CD8-positive, alpha-beta T cell (primary cell): ENCODE measurements at regions of chr12 and their contacts with region 1.

Region 1: GRCh38 chr12:1795785-1796514 is 24.4 kb upstream of the LRTM2 start:
- DNase-seq: peak; percentile 90 to 97 (median 94)
- ATAC-seq: peak; percentile 93
- H3K4me3 ChIP-seq: peak overlapping the region; percentile 80 to 82
- H3K4me3 Mint-ChIP-seq: peak overlapping the region; percentile 90
- H3K27ac ChIP-seq: peak overlapping the region; percentile 54 to 80
- H3K27ac Mint-ChIP-seq: peak overlapping the region; percentile 91
- H3K4me1 ChIP-seq: peaks cover 22% of the 10 kb centered on the region
- H3K4me1 Mint-ChIP-seq: peaks cover 20% of the 10 kb centered on the region
- H3K27me3 ChIP-seq: no peaks in the 10 kb centered on the region
- H3K27me3 Mint-ChIP-seq: no peaks in the 10 kb centered on the region
- CTCF ChIP-seq: peak; percentile 92

Region 2: DNA sequence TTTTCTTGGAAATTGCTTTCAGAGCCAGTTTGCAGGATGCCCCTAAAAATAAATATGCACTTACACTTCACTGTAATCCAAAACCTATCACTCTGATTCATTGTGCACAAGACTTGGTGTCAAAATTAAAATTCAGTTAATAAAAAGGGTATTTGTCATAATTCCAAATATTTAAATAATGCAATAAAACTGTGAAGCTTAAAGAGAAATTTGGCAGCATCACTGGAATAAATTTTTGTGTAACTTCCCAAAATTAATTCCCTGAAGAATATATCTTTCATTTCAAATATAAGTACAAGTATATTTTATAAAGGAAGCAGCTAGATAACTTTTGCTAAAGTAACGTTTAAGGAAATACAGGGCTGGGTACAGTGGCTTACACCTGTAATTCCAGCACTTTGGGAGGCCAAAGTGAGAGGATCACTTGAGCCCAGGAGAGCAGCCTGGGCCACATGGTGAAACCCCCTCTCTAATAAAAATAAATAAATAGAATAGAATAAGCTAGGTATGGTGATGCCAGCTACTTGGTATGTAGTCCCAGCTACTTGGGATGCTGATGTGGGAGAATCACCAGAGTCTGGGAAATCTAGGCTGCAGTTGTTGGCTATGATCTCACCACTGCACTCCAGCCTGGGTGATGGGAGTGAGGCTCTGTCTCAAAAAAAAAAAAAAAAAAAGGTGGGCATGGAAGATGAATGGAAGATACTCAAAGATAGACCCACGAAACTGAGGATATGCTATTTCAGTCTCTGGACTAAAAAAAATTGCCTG is 435.3 kb before region 1 on chr12:
- CTCF ChIA-PET with region 1: no interaction called
- POLR2A ChIA-PET with region 1: no interaction called
- intact Hi-C with region 1: no loop called
- DNase-seq: no peak
- ATAC-seq: no peak
- H3K4me3 ChIP-seq: no peak overlapping the region
- H3K4me3 Mint-ChIP-seq: no peak overlapping the region
- H3K27ac ChIP-seq: no peak overlapping the region
- H3K27ac Mint-ChIP-seq: no peak overlapping the region
- H3K4me1 ChIP-seq: no peaks in the 10 kb centered on the region
- H3K4me1 Mint-ChIP-seq: no peaks in the 10 kb centered on the region
- H3K27me3 ChIP-seq: no peaks in the 10 kb centered on the region
- H3K27me3 Mint-ChIP-seq: no peaks in the 10 kb centered on the region
- CTCF ChIP-seq: no peak

Region 3: GRCh38 chr12:1605129-1606020 is 190.6 kb before region 1 on chr12:
- CTCF ChIA-PET with region 1: interaction called, 10 read pairs
- POLR2A ChIA-PET with region 1: no interaction called
- intact Hi-C with region 1: no loop called
- DNase-seq: peak in 8 of 9 experiments; percentile 32 to 86 (median 64)
- ATAC-seq: peak; percentile 70
- H3K4me3 ChIP-seq: peak overlapping the region; percentile 36 to 37
- H3K4me3 Mint-ChIP-seq: peak overlapping the region; percentile 86
- H3K27ac ChIP-seq: no peak overlapping the region
- H3K27ac Mint-ChIP-seq: peak overlapping the region; percentile 24
- H3K4me1 ChIP-seq: peaks cover 23% of the 10 kb centered on the region
- H3K4me1 Mint-ChIP-seq: peaks cover 31% of the 10 kb centered on the region
- H3K27me3 ChIP-seq: no peaks in the 10 kb centered on the region
- H3K27me3 Mint-ChIP-seq: no peaks in the 10 kb centered on the region
- CTCF ChIP-seq: peak; percentile 64

Region 4: DNA sequence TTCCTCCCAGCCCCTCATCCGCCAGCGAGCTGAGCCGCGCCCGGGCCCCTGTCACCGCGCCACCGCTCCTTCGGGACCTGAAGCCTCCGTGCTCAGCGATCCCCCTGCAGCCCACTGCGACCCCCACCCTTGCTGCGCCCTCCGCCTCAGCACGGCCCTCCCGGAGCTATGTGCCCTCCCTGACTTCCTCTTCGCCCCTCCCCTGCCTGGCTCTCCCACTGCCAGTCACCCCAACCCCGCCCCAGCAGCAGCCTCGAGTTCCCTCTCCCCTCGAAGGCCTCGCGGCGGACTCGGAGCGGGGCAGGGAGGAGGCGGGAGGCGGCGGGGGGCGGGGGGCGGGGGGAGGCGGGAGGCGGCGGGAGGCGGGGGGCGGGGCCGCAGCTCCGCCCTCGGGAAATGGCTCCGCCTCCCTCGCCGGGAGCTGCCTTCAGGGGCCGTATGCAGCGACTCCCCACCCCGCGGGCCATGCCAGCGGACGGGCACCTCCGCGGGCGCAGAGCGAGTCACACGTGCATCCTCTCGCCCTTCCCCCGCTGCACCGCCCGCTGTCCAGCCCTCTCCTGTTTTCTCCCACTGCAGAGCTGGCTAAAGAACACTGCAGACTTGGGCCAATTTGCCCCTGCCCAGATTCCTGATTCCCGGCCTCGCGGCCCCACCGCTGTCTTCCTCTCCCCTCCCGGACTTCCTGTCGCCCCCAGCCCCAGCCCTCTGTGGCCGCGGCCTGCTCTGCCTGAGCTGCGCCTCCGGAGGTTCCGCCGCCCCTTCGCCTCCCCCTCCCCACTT is 134.2 kb before region 1 on chr12:
- CTCF ChIA-PET with region 1: interaction called, 454 read pairs
- POLR2A ChIA-PET with region 1: interaction called, 5 read pairs
- intact Hi-C with region 1: no loop called
- DNase-seq: peak; percentile 63 to 95 (median 78)
- ATAC-seq: peak; percentile 74
- H3K4me3 ChIP-seq: peak overlapping the region; percentile 50 to 52
- H3K4me3 Mint-ChIP-seq: peak overlapping the region; percentile 78
- H3K27ac ChIP-seq: peak overlapping the region in 1 of 2 experiments; percentile 56
- H3K27ac Mint-ChIP-seq: peak overlapping the region; percentile 74
- H3K4me1 ChIP-seq: peaks cover 17% of the 10 kb centered on the region
- H3K4me1 Mint-ChIP-seq: peaks cover 43% of the 10 kb centered on the region
- H3K27me3 ChIP-seq: no peaks in the 10 kb centered on the region
- H3K27me3 Mint-ChIP-seq: no peaks in the 10 kb centered on the region
- CTCF ChIP-seq: no peak

Region 5: DNA sequence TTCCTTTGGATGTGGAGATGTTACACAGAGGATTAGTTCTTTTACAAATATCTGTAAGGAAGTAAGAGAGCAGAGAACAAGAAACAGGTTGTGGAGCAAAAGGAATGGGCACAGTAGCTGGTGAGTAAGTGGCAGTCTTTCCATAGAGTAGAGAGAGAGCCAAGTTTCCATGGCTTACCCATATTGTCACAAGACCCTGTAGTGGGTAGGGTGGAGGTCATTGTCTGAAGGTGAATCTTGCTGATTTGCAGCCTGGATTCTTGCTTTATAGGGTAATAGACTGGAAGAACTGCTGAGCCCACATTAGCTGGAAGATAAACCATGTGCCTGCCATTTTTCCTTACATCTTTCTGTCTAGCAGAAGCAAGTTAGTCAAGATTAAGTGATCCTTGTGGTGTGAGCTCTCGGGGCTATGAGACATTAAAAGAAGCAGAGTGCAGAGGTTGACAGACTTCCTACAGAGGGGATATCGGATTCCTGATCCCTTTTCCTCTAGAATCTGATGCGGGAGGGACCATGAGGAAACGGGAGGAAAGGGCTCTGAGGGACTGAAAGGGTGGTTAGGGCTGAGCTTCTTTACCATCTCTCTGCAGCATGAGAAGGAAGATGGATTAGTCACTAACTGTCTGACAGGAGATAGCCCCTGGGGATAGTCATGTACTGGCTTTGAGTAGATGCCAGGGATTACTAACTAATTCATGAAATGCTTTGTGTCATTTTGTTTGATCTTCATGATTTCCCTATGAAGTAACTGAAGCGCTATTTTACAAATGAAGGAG is 19.6 kb before region 1 on chr12:
- CTCF ChIA-PET with region 1: interaction called, 13 read pairs
- POLR2A ChIA-PET with region 1: interaction called, 3 read pairs
- intact Hi-C with region 1: no loop called
- DNase-seq: no peak
- ATAC-seq: no peak
- H3K4me3 ChIP-seq: no peak overlapping the region
- H3K4me3 Mint-ChIP-seq: no peak overlapping the region
- H3K27ac ChIP-seq: no peak overlapping the region
- H3K27ac Mint-ChIP-seq: peak overlapping the region; percentile 52
- H3K4me1 ChIP-seq: no peaks in the 10 kb centered on the region
- H3K4me1 Mint-ChIP-seq: peaks cover 10% of the 10 kb centered on the region
- H3K27me3 ChIP-seq: no peaks in the 10 kb centered on the region
- H3K27me3 Mint-ChIP-seq: no peaks in the 10 kb centered on the region
- CTCF ChIP-seq: no peak

Region 6: GRCh38 chr12:2004113-2004929 is 208.4 kb after region 1 on chr12 and contains the start of gene DCP1B:
- CTCF ChIA-PET with region 1: interaction called, 3 read pairs
- POLR2A ChIA-PET with region 1: no interaction called
- intact Hi-C with region 1: loop called (anchors 1 to 2 kb)
- DNase-seq: peak; percentile 83 to 98 (median 92)
- ATAC-seq: peak; percentile 94
- H3K4me3 ChIP-seq: peak within 1 kb of the TSS; percentile 65 to 99
- H3K4me3 Mint-ChIP-seq: peak within 1 kb of the TSS; percentile 98
- H3K27ac ChIP-seq: peak within 1 kb of the TSS; percentile 71 to 92
- H3K27ac Mint-ChIP-seq: peak within 1 kb of the TSS; percentile 99
- H3K4me1 ChIP-seq: peaks cover 19% of the 10 kb centered on the region
- H3K4me1 Mint-ChIP-seq: peaks cover 37% of the 10 kb centered on the region
- H3K27me3 ChIP-seq: peaks cover 0 to 2% of the 10 kb centered on the region in 2 experiments
- H3K27me3 Mint-ChIP-seq: no peaks in the 10 kb centered on the region
- CTCF ChIP-seq: no peak
- total RNA-seq, gene DCP1B: 3.0 TPM

Region 7: GRCh38 chr12:2244013-2244861 is 448.3 kb after region 1 on chr12:
- CTCF ChIA-PET with region 1: no interaction called
- POLR2A ChIA-PET with region 1: no interaction called
- intact Hi-C with region 1: no loop called
- DNase-seq: no peak
- ATAC-seq: no peak
- H3K4me3 ChIP-seq: no peak overlapping the region
- H3K4me3 Mint-ChIP-seq: no peak overlapping the region
- H3K27ac ChIP-seq: no peak overlapping the region
- H3K27ac Mint-ChIP-seq: no peak overlapping the region
- H3K4me1 ChIP-seq: no peaks in the 10 kb centered on the region
- H3K4me1 Mint-ChIP-seq: no peaks in the 10 kb centered on the region
- H3K27me3 ChIP-seq: no peaks in the 10 kb centered on the region
- H3K27me3 Mint-ChIP-seq: peaks cover 5% of the 10 kb centered on the region
- CTCF ChIP-seq: no peak

Region 8: GRCh38 chr12:2794736-2795289 is 998.9 kb after region 1 on chr12 and contains the start of gene FKBP4:
- CTCF ChIA-PET with region 1: no interaction called
- POLR2A ChIA-PET with region 1: no interaction called
- intact Hi-C with region 1: loop called (anchors 5 to 10 kb)
- DNase-seq: peak; percentile 75 to 95 (median 88)
- ATAC-seq: peak; percentile 92
- H3K4me3 ChIP-seq: peak within 1 kb of the TSS; percentile 69 to 71
- H3K4me3 Mint-ChIP-seq: peak within 1 kb of the TSS; percentile 91
- H3K27ac ChIP-seq: peak within 1 kb of the TSS; percentile 50 to 63
- H3K27ac Mint-ChIP-seq: peak within 1 kb of the TSS; percentile 88
- H3K4me1 ChIP-seq: peaks cover 12% of the 10 kb centered on the region
- H3K4me1 Mint-ChIP-seq: peaks cover 24% of the 10 kb centered on the region
- H3K27me3 ChIP-seq: no peaks in the 10 kb centered on the region
- H3K27me3 Mint-ChIP-seq: no peaks in the 10 kb centered on the region
- CTCF ChIP-seq: no peak
- total RNA-seq, gene FKBP4: 31.1 to 34.5 TPM